AG04450 (cell line): ENCODE measurements at regions of chr6 and their contacts with region 1.

Region 1: DNA sequence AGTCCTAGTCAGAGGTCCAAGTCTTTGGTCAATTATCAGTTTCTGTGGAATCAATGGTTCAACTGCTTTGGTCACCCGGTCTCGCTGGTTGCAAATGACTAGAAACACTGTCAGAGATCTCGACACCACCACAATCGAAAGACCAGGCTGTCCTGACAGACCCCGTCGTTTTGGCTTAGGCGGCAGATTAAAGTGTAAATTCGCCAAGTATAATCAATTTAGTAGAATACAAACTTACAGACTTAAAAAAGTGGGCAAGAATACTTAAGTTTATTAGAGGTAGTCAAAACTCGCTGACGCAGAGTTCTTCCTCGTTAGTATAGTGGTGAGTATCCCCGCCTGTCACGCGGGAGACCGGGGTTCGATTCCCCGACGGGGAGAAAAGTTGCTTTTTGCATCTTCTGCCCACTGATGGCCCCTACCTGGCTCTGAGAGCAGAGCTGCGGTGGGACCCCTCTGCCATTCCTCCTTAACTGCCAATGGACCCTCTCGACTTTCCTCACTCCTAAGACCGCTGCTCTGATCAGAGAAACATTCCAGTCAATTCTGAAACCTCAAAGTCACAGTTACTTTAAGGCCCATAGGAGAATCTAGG is 30.6 kb upstream of the ZNF184 start:
- DNase-seq: no peak
- H3K4me3 ChIP-seq: peak overlapping the region; percentile 58
- H3K27ac ChIP-seq: no peak overlapping the region
- H3K27me3 ChIP-seq: no peaks in the 10 kb centered on the region
- CTCF ChIP-seq: no peak

Region 2: DNA sequence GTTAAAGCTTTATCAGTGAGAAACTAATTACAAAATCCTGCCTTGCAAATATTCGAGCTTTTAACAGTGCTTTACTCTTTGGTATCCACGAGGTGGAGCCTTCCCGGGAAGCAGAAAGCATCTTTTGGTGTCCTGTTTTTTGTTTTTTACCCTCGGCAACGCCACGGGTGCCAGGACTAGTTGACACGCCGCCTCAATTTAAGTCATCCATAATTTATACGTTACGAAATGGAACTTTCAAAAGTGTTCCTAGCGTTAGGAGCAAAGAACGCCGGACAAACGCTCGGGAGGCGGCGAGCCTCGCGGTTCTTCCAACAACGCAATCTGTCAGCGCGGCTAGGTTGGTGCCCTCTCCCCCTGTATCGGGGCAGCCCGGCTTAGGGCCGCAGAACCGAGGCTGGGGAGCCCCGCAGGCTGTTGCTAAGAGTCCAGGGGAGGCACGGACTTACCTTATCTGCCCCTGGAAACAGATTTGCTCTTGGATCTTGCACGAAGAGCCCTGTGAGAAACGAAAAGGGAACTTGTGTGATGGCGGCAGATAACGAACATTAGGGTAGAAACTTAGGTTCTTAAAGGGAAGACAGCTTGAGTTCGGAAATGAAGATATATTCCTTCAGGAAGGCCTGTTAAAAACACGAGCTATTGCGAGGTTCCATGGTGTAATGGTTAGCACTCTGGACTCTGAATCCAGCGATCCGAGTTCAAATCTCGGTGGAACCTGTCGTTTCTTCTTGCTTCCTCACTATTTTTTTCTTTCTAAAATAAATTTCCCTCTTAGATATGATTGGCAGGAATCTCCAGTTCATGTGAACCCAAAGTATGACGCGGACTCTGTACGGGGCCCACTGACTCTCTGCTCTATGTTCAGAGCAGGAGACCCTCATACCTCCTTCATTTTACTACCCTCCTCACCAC is 15.6 kb after region 1 on chr6:
- CTCF ChIA-PET with region 1: interaction called, 36 read pairs
- POLR2A ChIA-PET with region 1: interaction called, 5 read pairs
- DNase-seq: peak; percentile 79
- H3K4me3 ChIP-seq: peak overlapping the region; percentile 93
- H3K27ac ChIP-seq: peak overlapping the region; percentile 77
- H3K27me3 ChIP-seq: peaks cover 11% of the 10 kb centered on the region
- CTCF ChIP-seq: peak; percentile 79